ENCODE measurements at regions of chr20 and their contacts with region 1.

Region 1: GRCh38 chr20:51480507-51481270 is 61.8 kb downstream of the NFATC2 start:
- DNase-seq: peak in 4 of 5 donors; percentile 20 to 75 (median 30)
- H3K4me3 ChIP-seq: peak overlapping the region in 1 of 2 donors; percentile 0
- H3K4me3 Mint-ChIP-seq: peak overlapping the region; percentile 78 to 86 (median 80)
- H3K27ac ChIP-seq: peak overlapping the region; percentile 70
- H3K27ac Mint-ChIP-seq: peak overlapping the region; percentile 79 to 97 (median 92)
- H3K4me1 ChIP-seq: peaks cover 57% of the 10 kb centered on the region
- H3K4me1 Mint-ChIP-seq: peaks cover 62 to 92% (median 80%) of the 10 kb centered on the region in 4 donors
- H3K27me3 ChIP-seq: no peaks in the 10 kb centered on the region
- H3K27me3 Mint-ChIP-seq: no peaks in the 10 kb centered on the region

Region 2: DNA sequence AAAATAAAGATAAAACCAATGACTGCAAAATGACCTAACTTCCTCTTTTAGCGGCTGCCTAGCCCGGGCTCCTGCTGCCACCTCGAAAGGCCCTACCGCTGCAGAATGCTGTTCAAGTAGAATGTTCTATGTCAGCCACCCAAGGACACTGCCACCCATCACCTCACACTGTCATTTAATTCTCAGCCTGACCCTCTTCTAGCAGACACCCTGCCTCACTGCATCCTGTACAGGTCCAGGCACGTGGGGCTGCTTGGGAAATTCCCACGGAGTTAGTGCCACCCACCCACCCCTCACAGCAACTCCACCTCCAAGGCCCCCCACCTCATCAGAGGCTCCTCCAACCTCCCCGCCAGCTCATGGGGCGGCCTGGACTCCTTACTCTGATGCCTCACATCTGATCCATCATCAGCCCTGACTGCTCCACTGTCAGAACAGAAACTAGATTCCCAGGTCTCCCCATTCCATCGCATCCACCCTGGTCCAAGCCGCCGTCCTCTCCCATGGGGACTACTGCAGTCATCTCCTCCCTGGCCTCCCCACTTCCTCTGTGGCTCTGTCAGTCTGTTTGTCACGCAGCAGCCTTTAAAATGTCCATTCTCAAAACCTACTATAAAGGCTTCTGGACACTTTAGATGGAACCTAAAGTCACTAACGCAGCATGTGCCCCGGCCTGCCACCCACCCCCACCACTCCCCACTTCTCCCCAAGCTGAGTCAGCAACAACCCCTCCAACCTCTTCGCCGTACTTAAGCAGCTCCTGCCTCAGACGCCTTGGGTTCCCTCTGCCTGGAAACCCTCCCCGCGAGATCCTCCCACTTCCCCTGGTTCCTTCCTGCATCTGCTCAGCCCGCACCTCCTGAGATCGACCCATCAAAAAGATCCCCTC is 44.8 kb after region 1 on chr20:
- CTCF ChIA-PET with region 1: no interaction called
- POLR2A ChIA-PET with region 1: interaction called, 10 read pairs
- intact Hi-C with region 1: no loop called
- DNase-seq: peak; percentile 23 to 86 (median 31)
- H3K4me3 ChIP-seq: peak overlapping the region; percentile 17 to 22
- H3K4me3 Mint-ChIP-seq: peak overlapping the region; percentile 77 to 89 (median 86)
- H3K27ac ChIP-seq: peak overlapping the region; percentile 57
- H3K27ac Mint-ChIP-seq: peak overlapping the region; percentile 82 to 97 (median 92)
- H3K4me1 ChIP-seq: peaks cover 63% of the 10 kb centered on the region
- H3K4me1 Mint-ChIP-seq: peaks cover 59 to 87% (median 70%) of the 10 kb centered on the region in 4 donors
- H3K27me3 ChIP-seq: no peaks in the 10 kb centered on the region
- H3K27me3 Mint-ChIP-seq: no peaks in the 10 kb centered on the region

Region 3: DNA sequence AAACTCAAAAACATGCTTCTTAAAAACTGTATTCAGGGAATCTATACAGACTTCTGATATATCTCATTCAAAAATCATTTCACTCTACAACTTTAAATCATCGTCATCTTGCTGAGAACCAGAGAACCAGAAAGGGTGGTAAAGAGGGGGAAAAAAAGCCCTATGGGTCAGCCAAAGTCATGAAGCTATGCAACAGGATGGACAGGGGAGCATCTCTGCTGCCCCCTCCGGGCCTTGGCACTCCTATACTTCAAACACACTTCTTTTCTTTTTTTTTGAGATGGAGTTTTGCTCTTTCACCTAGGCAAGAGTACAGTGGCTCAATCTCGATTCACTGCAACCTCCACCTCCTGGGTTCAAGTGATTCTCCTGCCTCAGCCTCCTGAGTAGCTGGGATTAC is 135.4 kb after region 1 on chr20:
- CTCF ChIA-PET with region 1: no interaction called
- POLR2A ChIA-PET with region 1: no interaction called
- intact Hi-C with region 1: no loop called
- DNase-seq: no peak
- H3K4me3 ChIP-seq: no peak overlapping the region
- H3K4me3 Mint-ChIP-seq: no peak overlapping the region
- H3K27ac ChIP-seq: no peak overlapping the region
- H3K27ac Mint-ChIP-seq: no peak overlapping the region
- H3K4me1 ChIP-seq: no peaks in the 10 kb centered on the region
- H3K4me1 Mint-ChIP-seq: no peaks in the 10 kb centered on the region
- H3K27me3 ChIP-seq: no peaks in the 10 kb centered on the region
- H3K27me3 Mint-ChIP-seq: peaks cover 1 to 4% of the 10 kb centered on the region in 2 donors